ENCODE measurements at regions of chr2 and their contacts with region 1.

Region 1: GRCh38 chr2:202178342-202178958 is 59.9 kb downstream of the SUMO1 start:
- DNase-seq: peak; percentile 46
- H3K4me3 ChIP-seq: no peak overlapping the region
- H3K27ac ChIP-seq: no peak overlapping the region
- H3K4me1 ChIP-seq: no peaks in the 10 kb centered on the region
- H3K27me3 ChIP-seq: no peaks in the 10 kb centered on the region
- CTCF ChIP-seq: peak; percentile 76 to 85

Region 2: GRCh38 chr2:201680743-201681142 is 497.7 kb before region 1 on chr2:
- CTCF ChIA-PET with region 1: no interaction called
- dilution Hi-C with region 1: no loop called
- in situ Hi-C with region 1: no loop called
- intact Hi-C with region 1: loop called (anchors 5 kb)
- DNase-seq: no peak
- H3K4me3 ChIP-seq: no peak overlapping the region
- H3K27ac ChIP-seq: no peak overlapping the region
- H3K4me1 ChIP-seq: no peaks in the 10 kb centered on the region
- H3K27me3 ChIP-seq: no peaks in the 10 kb centered on the region
- CTCF ChIP-seq: peak; percentile 40 to 48

Region 3: DNA sequence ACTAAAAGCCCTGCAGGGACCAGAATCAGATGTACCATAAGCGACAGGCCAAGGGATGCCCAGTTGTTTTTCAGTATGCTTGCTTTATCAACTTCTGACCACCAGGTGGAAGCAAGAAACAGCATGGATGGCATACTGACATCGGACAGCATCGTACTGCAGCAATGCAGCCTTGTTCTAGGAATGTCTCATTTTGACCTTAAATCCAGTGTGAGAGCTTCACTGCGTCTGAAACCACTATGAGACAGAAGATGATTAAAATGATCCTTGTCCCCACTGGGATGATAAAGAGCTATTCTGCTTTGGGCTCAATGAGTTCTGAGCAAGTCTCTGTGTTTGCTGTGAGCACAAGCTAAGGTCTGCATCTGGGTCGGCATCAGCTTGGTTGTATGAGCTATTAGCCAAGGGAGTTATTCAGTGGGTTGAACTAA is 317.8 kb before region 1 on chr2:
- CTCF ChIA-PET with region 1: no interaction called
- dilution Hi-C with region 1: no loop called
- in situ Hi-C with region 1: loop called in 1 of 2 experiments (anchors 25 kb)
- intact Hi-C with region 1: loop called (anchors 1 kb)
- DNase-seq: peak; percentile 65
- H3K4me3 ChIP-seq: no peak overlapping the region
- H3K27ac ChIP-seq: no peak overlapping the region
- H3K4me1 ChIP-seq: peaks cover 19% of the 10 kb centered on the region
- H3K27me3 ChIP-seq: no peaks in the 10 kb centered on the region
- CTCF ChIP-seq: peak; percentile 86 to 92

Region 4: DNA sequence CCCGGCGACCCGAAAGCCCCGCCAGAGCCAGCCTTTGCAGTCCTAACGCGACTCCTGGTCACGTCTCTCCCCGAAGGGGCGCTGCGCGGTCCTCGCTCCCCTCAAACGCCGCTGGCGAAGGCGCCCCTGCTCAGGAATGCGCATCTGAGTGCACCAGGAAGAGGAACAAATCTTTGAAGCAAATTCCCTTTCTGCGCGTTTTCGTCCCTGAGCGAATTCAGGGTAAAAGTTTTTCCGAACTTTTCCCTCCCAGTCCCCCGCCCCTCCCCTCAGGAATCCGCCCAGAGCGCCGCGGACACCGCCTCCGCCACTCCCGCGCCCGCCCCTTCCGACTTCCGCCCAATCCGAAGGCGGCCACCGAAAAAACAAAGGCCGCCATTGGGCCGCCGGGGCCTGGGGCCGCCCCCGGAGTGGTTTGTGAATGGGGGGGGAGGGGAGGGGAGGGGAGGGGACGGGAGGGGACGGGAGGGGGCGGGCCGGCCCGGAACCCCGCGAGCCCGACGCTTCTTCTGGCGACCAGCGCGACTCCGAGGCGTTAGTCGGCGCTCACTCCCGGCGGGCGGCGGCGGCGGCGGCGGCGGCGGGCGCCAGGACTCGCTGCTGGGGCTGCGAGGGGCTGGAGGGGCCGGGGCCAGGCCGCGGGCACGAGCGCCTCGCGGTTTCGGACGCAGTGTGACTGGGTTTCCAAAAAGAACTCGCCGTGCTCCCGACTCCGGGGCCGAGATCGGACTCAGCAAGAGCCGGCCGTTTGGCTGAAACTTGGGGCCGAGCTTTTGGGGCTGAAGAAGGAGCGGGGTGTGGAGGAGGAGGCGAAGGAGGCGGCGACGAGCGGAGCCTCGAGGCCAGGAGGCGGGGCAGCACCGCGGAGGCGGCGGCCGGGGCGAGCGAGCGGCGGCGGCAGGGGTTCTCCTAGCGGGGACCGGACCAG is 144.9 kb before region 1 on chr2 and contains the start of gene FZD7:
- CTCF ChIA-PET with region 1: no interaction called
- dilution Hi-C with region 1: no loop called
- in situ Hi-C with region 1: no loop called
- intact Hi-C with region 1: loop called (anchors 5 kb)
- DNase-seq: peak; percentile 90
- H3K4me3 ChIP-seq: peak within 1 kb of the TSS; percentile 63 to 79 (median 71)
- H3K27ac ChIP-seq: peak within 1 kb of the TSS; percentile 80
- H3K4me1 ChIP-seq: peaks cover 32% of the 10 kb centered on the region
- H3K27me3 ChIP-seq: no peaks in the 10 kb centered on the region
- CTCF ChIP-seq: peak in 1 of 2 donors; percentile 37
- total RNA-seq, gene FZD7: 21.6 to 66.5 TPM

Measured in mammary epithelial cell (primary cell).